ENCODE measurements at regions of chr3 and their contacts with region 1.

Region 1: DNA sequence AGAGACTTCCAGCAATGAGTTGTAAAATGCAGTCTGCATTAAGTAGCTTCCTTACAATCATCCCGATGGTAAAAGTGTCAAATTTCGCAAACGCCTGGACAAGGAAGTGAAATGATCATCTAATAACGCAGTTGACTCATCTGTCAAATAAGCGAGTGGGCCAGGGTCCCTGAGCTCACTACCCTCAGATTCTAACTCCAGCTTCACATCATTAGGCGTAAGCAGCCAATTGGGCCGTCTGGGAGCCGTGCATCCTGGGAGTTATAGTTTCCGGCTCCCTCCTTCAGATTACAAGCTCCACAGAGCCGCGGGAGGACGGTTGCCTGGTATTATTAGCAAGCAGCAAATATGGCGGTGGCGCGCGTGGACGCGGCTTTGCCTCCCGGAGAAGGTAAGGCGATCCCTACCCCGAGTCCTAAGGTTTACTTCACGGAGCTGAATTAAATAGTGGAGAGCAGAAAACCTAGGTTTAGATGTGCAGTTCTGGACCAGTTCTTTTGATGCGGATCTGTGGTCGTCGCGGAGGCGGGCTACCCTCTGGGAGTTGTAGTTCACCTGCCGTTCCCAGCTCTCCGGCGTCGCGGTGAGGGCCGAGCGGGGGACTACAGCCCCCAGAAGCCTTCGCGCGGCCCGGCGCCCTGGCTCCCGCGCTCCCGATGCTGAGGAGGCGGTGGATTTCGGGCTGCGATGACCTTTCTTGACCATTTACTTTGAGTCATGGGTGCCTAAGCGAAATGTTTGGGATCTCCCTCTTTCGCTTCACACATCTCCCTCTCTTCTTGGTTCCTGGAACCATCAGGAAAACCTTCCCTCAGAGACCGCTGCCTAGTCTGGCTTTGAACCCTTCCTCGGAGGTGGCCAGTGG is at the start of gene CEP97:
- DNase-seq: peak; percentile 89
- H3K4me3 ChIP-seq: peak within 1 kb of the TSS; percentile 68 to 99 (median 85)
- H3K27ac ChIP-seq: peak within 1 kb of the TSS; percentile 56
- H3K4me1 ChIP-seq: peaks cover 28% of the 10 kb centered on the region
- H3K27me3 ChIP-seq: no peaks in the 10 kb centered on the region
- CTCF ChIP-seq: no peak
- total RNA-seq, gene CEP97: 15.7 to 15.9 TPM

Region 2: DNA sequence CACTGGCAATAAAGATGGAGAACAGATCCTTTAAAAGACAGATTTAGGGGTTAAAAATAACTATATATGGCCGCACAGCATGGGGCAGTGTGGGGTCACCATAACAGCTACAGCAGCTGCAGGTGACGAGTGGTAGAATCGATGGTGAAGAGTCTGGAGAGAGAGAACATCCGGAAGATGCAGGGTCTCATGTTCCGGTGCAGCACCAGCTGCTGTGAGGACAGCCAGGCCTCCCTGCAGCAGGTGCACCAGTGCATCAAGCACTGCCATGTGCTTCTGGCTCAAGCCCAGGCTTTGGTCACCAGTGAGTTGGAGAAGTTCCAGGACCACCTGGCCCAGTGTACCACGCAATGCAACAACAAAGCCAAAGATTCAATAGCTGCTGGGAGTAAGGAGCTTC is 310.4 kb before region 1 on chr3:
- CTCF ChIA-PET with region 1: no interaction called
- dilution Hi-C with region 1: no loop called
- in situ Hi-C with region 1: no loop called
- intact Hi-C with region 1: no loop called
- DNase-seq: no peak
- H3K4me3 ChIP-seq: no peak overlapping the region
- H3K27ac ChIP-seq: no peak overlapping the region
- H3K4me1 ChIP-seq: no peaks in the 10 kb centered on the region
- H3K27me3 ChIP-seq: no peaks in the 10 kb centered on the region
- CTCF ChIP-seq: no peak

Region 3: DNA sequence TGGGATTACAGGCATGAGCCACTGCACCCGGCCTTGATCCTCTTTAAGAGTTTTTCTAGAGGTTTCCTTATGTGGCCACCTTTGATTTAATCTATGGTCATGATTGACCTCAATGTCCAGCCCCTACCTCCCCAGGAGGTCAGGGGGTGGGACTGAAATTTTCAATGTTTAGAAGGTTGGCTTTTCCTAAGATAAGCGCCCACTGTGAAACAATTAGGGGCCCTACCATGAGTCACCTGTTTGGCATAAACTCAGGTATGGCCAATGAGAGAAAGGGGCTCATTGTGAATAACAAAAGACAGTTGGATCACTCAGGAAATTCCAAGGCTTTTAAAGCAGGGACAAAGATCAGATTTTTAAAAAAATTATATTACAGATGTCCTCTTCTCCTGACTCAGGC is 98.7 kb before region 1 on chr3:
- CTCF ChIA-PET with region 1: no interaction called
- dilution Hi-C with region 1: no loop called
- in situ Hi-C with region 1: no loop called
- intact Hi-C with region 1: no loop called
- DNase-seq: peak; percentile 10
- H3K4me3 ChIP-seq: no peak overlapping the region
- H3K27ac ChIP-seq: no peak overlapping the region
- H3K4me1 ChIP-seq: no peaks in the 10 kb centered on the region
- H3K27me3 ChIP-seq: no peaks in the 10 kb centered on the region
- CTCF ChIP-seq: no peak

Region 4: GRCh38 chr3:101758224-101758623 is 33.7 kb after region 1 on chr3:
- CTCF ChIA-PET with region 1: no interaction called
- dilution Hi-C with region 1: loop called (anchors 5 kb)
- in situ Hi-C with region 1: no loop called
- intact Hi-C with region 1: no loop called
- DNase-seq: no peak
- H3K4me3 ChIP-seq: no peak overlapping the region
- H3K27ac ChIP-seq: no peak overlapping the region
- H3K4me1 ChIP-seq: no peaks in the 10 kb centered on the region
- H3K27me3 ChIP-seq: no peaks in the 10 kb centered on the region
- CTCF ChIP-seq: no peak

Region 5: GRCh38 chr3:101779047-101779821 is 54.7 kb after region 1 on chr3 and contains the start of gene NXPE3:
- CTCF ChIA-PET with region 1: no interaction called
- dilution Hi-C with region 1: no loop called
- in situ Hi-C with region 1: no loop called
- intact Hi-C with region 1: loop called (anchors 2 kb)
- DNase-seq: peak; percentile 81
- H3K4me3 ChIP-seq: peak within 1 kb of the TSS; percentile 58 to 88 (median 65)
- H3K27ac ChIP-seq: peak within 1 kb of the TSS; percentile 37
- H3K4me1 ChIP-seq: peaks cover 23% of the 10 kb centered on the region
- H3K27me3 ChIP-seq: no peaks in the 10 kb centered on the region
- CTCF ChIP-seq: no peak
- total RNA-seq, gene NXPE3: 19.4 to 21.5 TPM

Region 6: DNA sequence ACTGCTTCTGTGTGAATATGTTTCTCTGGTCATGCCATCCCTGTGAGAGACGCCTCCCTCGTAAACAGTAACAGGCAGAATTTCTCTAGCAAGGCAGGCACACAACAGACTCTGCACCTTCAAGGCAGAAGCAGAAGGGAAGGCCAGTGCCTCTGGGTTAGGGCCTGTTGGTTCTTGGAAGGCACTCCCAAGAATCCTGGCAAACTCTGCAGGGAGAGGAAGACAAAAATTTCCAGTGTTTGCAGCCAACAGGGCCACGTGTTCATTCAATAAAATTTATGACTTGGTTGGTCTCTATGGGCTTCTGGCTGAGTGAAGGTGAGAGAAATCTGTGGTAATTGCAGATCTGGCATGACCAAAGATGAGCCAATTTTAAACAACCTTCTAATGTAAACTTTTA is 164.1 kb after region 1 on chr3:
- CTCF ChIA-PET with region 1: no interaction called
- dilution Hi-C with region 1: no loop called
- in situ Hi-C with region 1: no loop called
- intact Hi-C with region 1: no loop called
- DNase-seq: no peak
- H3K4me3 ChIP-seq: no peak overlapping the region
- H3K27ac ChIP-seq: no peak overlapping the region
- H3K4me1 ChIP-seq: peaks cover 11% of the 10 kb centered on the region
- H3K27me3 ChIP-seq: no peaks in the 10 kb centered on the region
- CTCF ChIP-seq: no peak

Measured in mammary epithelial cell (primary cell).